ENCODE measurements at regions of chr15 and their contacts with region 1.

Region 1: GRCh38 chr15:36579792-36580431 is 486 bp downstream of the CDIN1 start:
- DNase-seq: peak in 1 of 2 donors; percentile 37
- H3K4me3 ChIP-seq: peak overlapping the region; percentile 82 to 88
- H3K27ac ChIP-seq: peak overlapping the region; percentile 89 to 91
- H3K4me1 ChIP-seq: no peaks in the 10 kb centered on the region
- H3K27me3 ChIP-seq: no peaks in the 10 kb centered on the region
- CTCF ChIP-seq: no peak
- POLR2A ChIP-seq: no peak

Region 2: DNA sequence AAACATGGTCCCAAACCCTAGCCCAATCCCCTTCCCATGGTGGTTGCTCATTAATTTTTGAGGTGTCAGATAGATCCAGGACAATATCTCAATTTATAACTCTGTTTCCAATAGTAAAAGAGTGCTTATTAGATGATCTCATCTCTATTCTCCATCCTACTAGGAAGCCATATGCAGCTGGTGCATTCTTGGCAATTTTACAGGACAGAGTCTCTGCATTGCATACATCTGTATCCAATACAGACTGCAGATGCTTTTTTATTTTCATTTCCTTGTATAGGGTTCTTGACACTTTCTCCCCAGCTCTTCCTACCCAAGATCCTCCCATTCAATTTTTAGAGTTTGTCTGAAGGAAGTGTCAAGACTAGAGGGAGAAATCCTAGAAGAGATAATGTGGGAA is 839.2 kb before region 1 on chr15:
- intact Hi-C with region 1: loop called (anchors 10 kb)
- DNase-seq: no peak
- H3K4me3 ChIP-seq: no peak overlapping the region
- H3K27ac ChIP-seq: no peak overlapping the region
- H3K4me1 ChIP-seq: no peaks in the 10 kb centered on the region
- H3K27me3 ChIP-seq: no peaks in the 10 kb centered on the region
- CTCF ChIP-seq: no peak
- POLR2A ChIP-seq: no peak

Region 3: GRCh38 chr15:36658312-36658711 is 78.4 kb after region 1 on chr15:
- intact Hi-C with region 1: no loop called
- DNase-seq: no peak
- H3K4me3 ChIP-seq: no peak overlapping the region
- H3K27ac ChIP-seq: peak overlapping the region in 1 of 2 donors; percentile 40
- H3K4me1 ChIP-seq: peaks cover 0 to 10% of the 10 kb centered on the region in 2 donors
- H3K27me3 ChIP-seq: no peaks in the 10 kb centered on the region
- CTCF ChIP-seq: no peak
- POLR2A ChIP-seq: no peak